Dendritic cell treated with granulocyte-macrophage colony-stimulating factor and Interleukin-4, amounts not matched to agents 40 ng/mL and 50 ng/mL, for 4 days (primary cell): ENCODE measurements at regions of chr3 and their contacts with region 1.

Region 1: DNA sequence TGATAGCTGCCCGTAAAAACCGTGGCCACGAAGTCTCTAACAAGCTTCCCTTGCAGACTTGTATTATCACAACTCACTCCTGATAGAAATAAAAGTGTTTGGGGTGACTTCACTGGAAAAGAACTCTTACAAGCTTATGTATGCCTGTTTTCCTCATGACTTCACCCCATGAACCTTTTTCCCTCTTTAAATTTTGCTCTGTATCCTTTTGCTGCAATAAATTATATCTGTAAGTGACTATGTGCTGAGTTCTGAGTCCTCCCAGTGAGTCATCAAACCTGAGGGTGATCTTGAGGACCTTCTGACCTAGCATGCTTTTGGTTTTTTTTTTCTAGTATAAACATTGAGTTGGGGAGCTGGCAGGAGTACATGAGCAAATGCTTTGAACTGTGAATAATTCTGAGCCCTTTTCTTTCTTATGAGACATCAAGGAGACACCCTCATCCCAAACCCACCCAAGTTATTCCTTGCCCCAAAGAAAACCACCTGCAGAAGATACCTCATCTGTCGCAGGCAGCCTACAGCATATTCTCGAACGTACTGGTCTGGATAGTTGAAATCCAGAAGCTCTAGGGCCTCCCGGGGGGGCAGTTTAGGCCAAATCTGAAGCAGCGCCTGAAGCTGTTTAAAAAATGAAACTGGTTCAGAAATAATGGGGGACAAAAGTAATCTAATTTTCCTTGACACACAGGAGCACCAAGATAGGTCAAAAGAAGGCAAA is 85.9 kb downstream of the FAIM start:
- H3K4me3 Mint-ChIP-seq: no peak overlapping the region
- H3K27ac Mint-ChIP-seq: no peak overlapping the region
- H3K4me1 Mint-ChIP-seq: no peaks in the 10 kb centered on the region
- H3K27me3 Mint-ChIP-seq: no peaks in the 10 kb centered on the region

Region 2: DNA sequence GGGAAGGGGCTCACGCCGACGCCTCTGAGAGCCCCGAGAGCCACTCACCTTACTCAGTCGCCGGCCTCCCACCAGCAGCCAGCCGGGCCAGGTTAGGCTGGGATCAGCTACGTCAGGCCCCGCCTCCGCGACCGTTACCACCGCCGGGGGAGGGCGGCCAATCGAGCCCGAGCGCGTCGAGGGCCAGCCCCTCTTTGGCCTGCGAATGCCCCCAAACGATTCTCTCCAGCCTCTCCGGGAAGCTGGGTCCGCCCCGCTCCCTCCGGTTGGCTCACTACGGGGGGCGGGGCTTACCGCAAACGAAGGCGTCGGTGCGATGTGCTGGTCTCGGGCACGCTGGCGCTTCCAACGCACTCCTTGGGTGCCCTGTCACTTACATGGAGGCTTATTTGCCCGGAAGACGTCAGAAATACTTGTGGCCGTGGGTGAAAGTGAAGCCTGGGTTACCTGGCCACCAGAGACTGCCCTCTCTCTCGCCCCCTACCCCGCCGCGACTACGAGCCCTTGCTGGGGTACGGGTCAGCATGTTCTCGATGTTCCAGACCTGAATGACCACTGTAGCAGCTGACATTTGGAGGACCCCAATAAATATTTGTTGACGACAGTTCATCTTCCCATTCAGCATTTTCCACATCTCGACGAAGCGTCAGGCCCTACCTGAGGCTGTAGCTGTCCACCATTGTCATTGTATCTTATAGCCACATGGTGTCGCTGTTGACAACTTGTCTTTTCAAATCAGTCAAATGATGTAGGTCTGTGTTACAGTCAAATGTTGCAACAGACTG is 100.1 kb before region 1 on chr3 and contains the start of gene CEP70:
- intact Hi-C with region 1: loop called (anchors 10 kb)
- H3K4me3 Mint-ChIP-seq: peak within 1 kb of the TSS; percentile 80
- H3K27ac Mint-ChIP-seq: peak within 1 kb of the TSS; percentile 64
- H3K4me1 Mint-ChIP-seq: peaks cover 16% of the 10 kb centered on the region
- H3K27me3 Mint-ChIP-seq: peaks cover 22% of the 10 kb centered on the region

Region 3: DNA sequence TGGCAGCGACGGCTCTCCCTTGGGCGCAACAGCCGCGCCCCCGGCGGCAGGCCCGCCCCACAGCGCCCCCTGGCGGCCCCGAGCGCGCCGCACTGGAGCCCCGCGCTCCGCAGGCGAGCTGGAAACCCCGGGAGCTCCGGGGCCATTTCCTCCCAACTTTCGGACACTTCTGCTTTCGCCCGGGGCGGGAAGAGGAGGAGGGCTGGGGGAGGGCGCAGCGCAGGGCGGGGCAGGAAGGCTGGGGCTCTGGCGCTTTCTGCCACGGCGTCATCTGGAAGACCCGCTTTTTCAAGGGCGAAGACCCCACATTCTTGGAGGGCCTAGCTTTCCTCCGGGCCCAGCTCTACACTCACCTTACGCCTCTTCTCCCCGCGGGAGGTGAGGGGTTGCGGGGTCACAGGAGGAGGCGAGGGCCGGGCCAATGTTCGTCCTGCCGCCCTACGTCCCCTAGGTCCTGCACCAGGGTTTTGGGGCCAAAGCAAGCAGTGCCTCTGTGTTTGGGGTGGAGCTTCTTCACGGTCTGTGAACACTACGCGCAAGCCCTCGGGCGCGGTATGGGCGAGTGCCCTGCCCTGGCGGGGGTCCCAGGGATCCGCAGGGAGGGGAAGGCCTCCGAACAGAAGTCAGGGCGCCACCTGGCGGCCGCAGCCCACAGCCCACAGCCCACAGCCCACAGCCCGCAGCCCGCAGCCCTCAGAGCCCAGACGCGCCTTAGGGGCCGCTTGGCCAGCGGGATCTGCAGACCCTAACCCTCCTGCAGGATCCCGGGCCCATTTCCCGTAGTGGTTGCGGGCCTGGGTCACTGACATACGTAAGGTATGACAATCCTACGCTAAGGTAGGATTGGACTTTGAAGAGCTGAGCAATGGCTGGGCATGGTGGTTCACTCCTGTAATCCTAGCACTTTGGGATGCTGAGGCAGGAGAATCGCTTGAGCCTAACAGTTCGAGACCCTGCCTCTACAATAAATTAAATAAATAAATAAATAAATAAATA is 221.4 kb after region 1 on chr3:
- intact Hi-C with region 1: loop called (anchors 1 kb)
- H3K4me3 Mint-ChIP-seq: peak overlapping the region; percentile 92
- H3K27ac Mint-ChIP-seq: peak overlapping the region; percentile 98
- H3K4me1 Mint-ChIP-seq: peaks cover 12% of the 10 kb centered on the region
- H3K27me3 Mint-ChIP-seq: peaks cover 2% of the 10 kb centered on the region

Region 4: DNA sequence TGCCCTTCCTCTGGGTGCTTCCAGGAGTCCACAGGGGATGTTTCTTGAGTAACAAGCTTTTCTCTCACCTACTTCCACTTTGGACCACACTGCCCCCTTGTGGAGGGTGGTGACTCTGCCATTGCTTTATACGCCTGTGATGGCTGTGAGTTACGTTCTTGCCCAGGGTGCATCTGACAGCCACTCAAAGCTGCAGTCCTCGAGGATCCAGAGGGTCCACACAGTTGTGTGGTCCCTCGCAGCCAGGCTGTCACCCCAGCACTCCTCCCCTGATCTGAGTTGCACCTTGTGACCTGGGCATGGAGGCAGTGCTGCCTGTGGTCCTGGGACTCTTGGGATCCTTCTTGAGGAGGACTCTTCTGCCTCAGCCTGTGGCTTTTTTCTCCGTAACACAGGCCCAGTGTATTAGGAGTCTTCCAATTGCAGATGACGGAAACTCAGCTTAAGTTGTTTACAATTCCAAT is 229.1 kb after region 1 on chr3:
- intact Hi-C with region 1: loop called (anchors 1 kb)
- H3K4me3 Mint-ChIP-seq: no peak overlapping the region
- H3K27ac Mint-ChIP-seq: no peak overlapping the region
- H3K4me1 Mint-ChIP-seq: peaks cover 6% of the 10 kb centered on the region
- H3K27me3 Mint-ChIP-seq: peaks cover 11% of the 10 kb centered on the region